ENCODE measurements at regions of chr6 and their contacts with region 1.

Region 1: DNA sequence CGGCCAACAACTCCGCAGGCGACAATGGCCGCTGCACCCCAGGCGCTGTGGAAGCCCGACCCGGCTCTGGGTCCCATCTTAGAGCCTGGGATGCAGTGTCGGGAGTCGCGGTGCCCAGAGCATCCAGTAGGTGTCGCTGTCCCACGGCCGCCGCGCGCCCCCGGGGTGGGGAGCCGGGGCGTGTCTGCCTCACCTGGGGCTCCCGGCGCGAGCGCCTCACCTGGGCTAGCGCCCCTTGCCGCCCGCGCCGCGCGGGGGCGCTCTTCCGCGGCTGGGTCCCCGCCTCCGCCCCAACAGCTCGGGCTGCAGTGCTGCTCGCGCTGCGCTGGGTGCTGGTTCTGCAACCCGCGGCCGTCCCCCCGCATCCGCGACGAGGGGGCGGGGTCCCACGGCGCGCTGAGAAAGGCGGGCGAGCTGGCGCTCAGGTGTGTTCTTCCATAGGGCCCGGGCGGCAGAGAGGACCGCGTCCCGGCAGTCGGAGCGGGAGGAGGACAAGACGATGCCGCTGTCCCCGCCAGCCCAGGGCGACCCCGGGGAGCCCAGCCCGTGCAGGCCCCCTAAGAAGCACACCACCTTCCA is at the start of gene CRYBG1:
- DNase-seq: peak; percentile 78
- H3K4me3 Mint-ChIP-seq: peak within 1 kb of the TSS; percentile 71
- H3K27ac Mint-ChIP-seq: no peak within 1 kb of the TSS
- H3K4me1 Mint-ChIP-seq: peaks cover 9% of the 10 kb centered on the region
- H3K27me3 Mint-ChIP-seq: peaks cover 40% of the 10 kb centered on the region
- total RNA-seq, gene CRYBG1: 12.9 to 13.0 TPM

Region 2: GRCh38 chr6:106163446-106163965 is 197.0 kb before region 1 on chr6:
- CTCF ChIA-PET with region 1: no interaction called
- intact Hi-C with region 1: no loop called
- DNase-seq: peak; percentile 66
- H3K4me3 Mint-ChIP-seq: no peak overlapping the region
- H3K27ac Mint-ChIP-seq: peak overlapping the region; percentile 78
- H3K4me1 Mint-ChIP-seq: peaks cover 35% of the 10 kb centered on the region
- H3K27me3 Mint-ChIP-seq: peaks cover 2% of the 10 kb centered on the region

Region 3: GRCh38 chr6:106370639-106371038 is 10.1 kb after region 1 on chr6:
- CTCF ChIA-PET with region 1: interaction called, 21 read pairs
- intact Hi-C with region 1: no loop called
- DNase-seq: no peak
- H3K4me3 Mint-ChIP-seq: no peak overlapping the region
- H3K27ac Mint-ChIP-seq: no peak overlapping the region
- H3K4me1 Mint-ChIP-seq: peaks cover 8% of the 10 kb centered on the region
- H3K27me3 Mint-ChIP-seq: no peaks in the 10 kb centered on the region

Region 4: DNA sequence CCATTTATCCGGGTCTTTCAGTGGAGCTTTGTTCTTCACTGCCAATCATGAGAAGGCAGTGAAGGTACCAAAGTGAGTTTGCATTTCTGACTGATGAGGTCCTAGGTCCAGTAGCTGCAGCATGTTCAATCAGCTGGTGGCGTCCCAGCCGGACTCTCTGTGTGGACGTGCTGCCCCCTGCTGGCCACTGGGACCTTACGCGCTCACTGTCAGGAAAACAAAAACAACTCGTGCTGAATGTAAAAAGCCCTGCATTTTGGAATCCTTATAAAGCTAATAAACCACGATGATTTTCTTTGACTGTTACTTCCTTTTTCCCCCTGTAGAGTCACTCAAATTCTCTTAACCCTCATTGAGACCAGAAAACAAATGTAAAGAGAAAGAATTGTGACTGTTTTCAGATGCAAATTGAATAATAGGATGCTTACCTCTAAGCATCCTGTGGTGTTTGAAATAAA is 619.0 kb after region 1 on chr6:
- CTCF ChIA-PET with region 1: interaction called, 4 read pairs
- intact Hi-C with region 1: loop called (anchors 10 kb)
- DNase-seq: peak; percentile 87
- H3K4me3 Mint-ChIP-seq: no peak overlapping the region
- H3K27ac Mint-ChIP-seq: no peak overlapping the region
- H3K4me1 Mint-ChIP-seq: no peaks in the 10 kb centered on the region
- H3K27me3 Mint-ChIP-seq: peaks cover 33% of the 10 kb centered on the region

Region 5: GRCh38 chr6:106997390-106998158 is 637.1 kb after region 1 on chr6:
- CTCF ChIA-PET with region 1: no interaction called
- intact Hi-C with region 1: no loop called
- DNase-seq: peak; percentile 75
- H3K4me3 Mint-ChIP-seq: no peak overlapping the region
- H3K27ac Mint-ChIP-seq: no peak overlapping the region
- H3K4me1 Mint-ChIP-seq: peaks cover 3% of the 10 kb centered on the region
- H3K27me3 Mint-ChIP-seq: no peaks in the 10 kb centered on the region

Measured in activated naive CD4-positive, alpha-beta T cell treated with anti-CD3 and anti-CD28 coated beads for 36 hours (primary cell).